Sigmoid colon (tissue), 7 donors: ENCODE measurements at regions of chr7 and their contacts with region 1.

Region 1: GRCh38 chr7:8217200-8218068 is 44.5 kb downstream of the ICA1 start:
- DNase-seq: no peak
- H3K4me3 ChIP-seq: no peak overlapping the region
- H3K27ac ChIP-seq: no peak overlapping the region
- H3K4me1 ChIP-seq: peaks cover 0 to 33% (median 26%) of the 10 kb centered on the region in 4 donors
- H3K27me3 ChIP-seq: no peaks in the 10 kb centered on the region
- CTCF ChIP-seq: peak; percentile 44 to 76 (median 75)
- EP300 ChIP-seq: no peak
- POLR2A ChIP-seq: no peak

Region 2: GRCh38 chr7:7182156-7183060 is 1035.0 kb before region 1 on chr7 and contains the start of gene C1GALT1:
- intact Hi-C with region 1: loop called (anchors 5 kb)
- DNase-seq: peak; percentile 99
- H3K4me3 ChIP-seq: peak within 1 kb of the TSS; percentile 73 to 98 (median 84)
- H3K27ac ChIP-seq: peak within 1 kb of the TSS; percentile 92 to 97 (median 95)
- H3K4me1 ChIP-seq: peaks cover 0 to 24% (median 16%) of the 10 kb centered on the region in 4 donors
- H3K27me3 ChIP-seq: no peaks in the 10 kb centered on the region
- CTCF ChIP-seq: peak; percentile 21 to 60 (median 52)
- EP300 ChIP-seq: no peak
- POLR2A ChIP-seq: peak; percentile 50 to 87
- total RNA-seq, gene C1GALT1: 10.0 to 19.8 (median 12.6) TPM

Region 3: DNA sequence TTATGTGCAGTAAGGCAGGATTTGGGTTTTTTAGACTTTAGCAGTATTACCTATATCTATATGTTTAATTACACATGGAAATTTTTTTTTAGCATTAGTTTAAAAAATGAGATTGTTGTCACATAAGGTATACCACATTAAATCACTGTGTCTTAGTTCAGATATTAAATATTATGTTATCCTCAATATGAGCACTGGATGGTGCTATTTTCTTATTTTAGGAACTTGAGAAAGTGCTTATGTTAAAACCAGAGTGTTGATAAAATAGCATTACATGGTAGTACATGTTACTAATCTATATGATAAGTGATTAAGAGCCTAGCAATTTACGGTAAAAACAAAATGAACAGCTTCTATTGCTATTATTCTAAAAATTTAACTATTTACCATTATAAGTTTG is 622.0 kb before region 1 on chr7:
- intact Hi-C with region 1: loop called (anchors 5 kb)
- DNase-seq: no peak
- H3K4me3 ChIP-seq: no peak overlapping the region
- H3K27ac ChIP-seq: no peak overlapping the region
- H3K4me1 ChIP-seq: no peaks in the 10 kb centered on the region
- H3K27me3 ChIP-seq: no peaks in the 10 kb centered on the region
- CTCF ChIP-seq: peak in 2 of 4 experiments; percentile 24 to 34
- EP300 ChIP-seq: no peak
- POLR2A ChIP-seq: no peak

Region 4: GRCh38 chr7:7761340-7761980 is 456.0 kb before region 1 on chr7:
- intact Hi-C with region 1: loop called (anchors 5 kb)
- DNase-seq: no peak
- H3K4me3 ChIP-seq: peak overlapping the region in 3 of 4 donors; percentile 36 to 48 (median 44)
- H3K27ac ChIP-seq: peak overlapping the region; percentile 58 to 72 (median 64)
- H3K4me1 ChIP-seq: peaks cover 0 to 37% (median 13%) of the 10 kb centered on the region in 4 donors
- H3K27me3 ChIP-seq: no peaks in the 10 kb centered on the region
- CTCF ChIP-seq: peak in 3 of 4 experiments; percentile 25 to 48 (median 30)
- EP300 ChIP-seq: no peak
- POLR2A ChIP-seq: no peak

Region 5: GRCh38 chr7:8232999-8233847 is 15.8 kb after region 1 on chr7:
- intact Hi-C with region 1: no loop called
- DNase-seq: no peak
- H3K4me3 ChIP-seq: no peak overlapping the region
- H3K27ac ChIP-seq: no peak overlapping the region
- H3K4me1 ChIP-seq: no peaks in the 10 kb centered on the region
- H3K27me3 ChIP-seq: no peaks in the 10 kb centered on the region
- CTCF ChIP-seq: no peak
- EP300 ChIP-seq: no peak
- POLR2A ChIP-seq: no peak

Region 6: DNA sequence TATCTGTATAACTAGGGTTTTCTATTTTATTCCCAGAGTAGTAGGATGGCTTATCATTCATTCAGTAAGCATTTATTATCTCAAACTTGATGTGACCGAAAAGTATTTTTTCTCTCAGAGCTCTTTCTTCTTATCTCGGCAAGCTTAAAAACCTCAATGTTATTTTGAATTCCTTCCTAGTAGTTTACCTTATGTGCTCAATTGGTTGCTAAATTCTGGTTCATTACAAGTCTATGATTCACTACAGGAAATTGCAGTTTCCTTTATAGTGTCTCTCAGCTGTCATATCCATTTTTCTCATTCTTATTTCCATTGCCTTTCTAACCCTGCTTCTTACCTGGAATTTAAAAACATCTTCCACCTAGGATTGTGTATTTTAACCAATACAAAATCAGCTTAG is 57.2 kb after region 1 on chr7:
- intact Hi-C with region 1: no loop called
- DNase-seq: no peak
- H3K4me3 ChIP-seq: no peak overlapping the region
- H3K27ac ChIP-seq: no peak overlapping the region
- H3K4me1 ChIP-seq: no peaks in the 10 kb centered on the region
- H3K27me3 ChIP-seq: no peaks in the 10 kb centered on the region
- CTCF ChIP-seq: no peak
- EP300 ChIP-seq: no peak
- POLR2A ChIP-seq: no peak